Head of caudate nucleus (tissue), 42 donors: ENCODE measurements at regions of chr1 and their contacts with region 1.

Region 1: DNA sequence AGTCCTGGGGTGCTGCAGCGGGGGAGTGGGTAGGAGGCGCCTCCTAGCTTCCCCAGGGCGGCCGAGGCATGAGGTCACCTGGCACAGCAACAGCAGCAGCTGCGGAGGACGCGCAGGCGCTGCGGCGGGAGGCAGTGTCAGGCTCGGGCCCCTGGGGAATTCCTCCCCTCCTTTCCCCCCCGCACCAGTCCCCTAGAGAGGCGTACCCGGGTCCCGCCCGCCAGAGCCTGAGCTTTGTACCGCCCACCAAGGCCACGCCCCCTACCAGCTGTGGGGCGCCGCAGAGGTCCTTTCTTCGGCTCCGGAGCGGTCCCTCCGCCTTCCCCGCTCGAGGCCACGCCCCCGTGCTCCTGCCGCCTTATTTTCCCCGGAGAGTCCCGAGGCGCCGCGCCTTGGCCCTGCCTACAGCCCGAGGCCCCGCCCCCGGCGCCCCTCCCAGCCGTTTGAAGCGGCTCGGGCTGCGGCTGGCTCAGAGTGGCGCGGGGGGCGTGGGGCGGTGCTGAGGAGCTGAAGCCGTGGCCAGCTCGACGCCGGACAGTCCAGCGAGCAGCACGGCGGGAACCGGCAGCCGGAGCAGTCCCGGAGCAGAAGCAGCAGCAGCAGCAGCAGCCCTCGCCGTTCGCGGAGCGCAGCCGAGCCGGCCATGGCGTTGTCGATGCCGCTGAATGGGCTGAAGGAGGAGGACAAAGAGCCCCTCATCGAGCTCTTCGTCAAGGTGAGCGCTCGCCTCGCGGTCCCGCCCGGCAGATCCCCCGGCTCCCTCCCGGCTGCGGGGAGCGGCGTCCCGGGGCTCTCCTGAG is at the start of gene CLIC4:
- DNase-seq: peak; percentile 98 to 100 (median 100)

Region 2: DNA sequence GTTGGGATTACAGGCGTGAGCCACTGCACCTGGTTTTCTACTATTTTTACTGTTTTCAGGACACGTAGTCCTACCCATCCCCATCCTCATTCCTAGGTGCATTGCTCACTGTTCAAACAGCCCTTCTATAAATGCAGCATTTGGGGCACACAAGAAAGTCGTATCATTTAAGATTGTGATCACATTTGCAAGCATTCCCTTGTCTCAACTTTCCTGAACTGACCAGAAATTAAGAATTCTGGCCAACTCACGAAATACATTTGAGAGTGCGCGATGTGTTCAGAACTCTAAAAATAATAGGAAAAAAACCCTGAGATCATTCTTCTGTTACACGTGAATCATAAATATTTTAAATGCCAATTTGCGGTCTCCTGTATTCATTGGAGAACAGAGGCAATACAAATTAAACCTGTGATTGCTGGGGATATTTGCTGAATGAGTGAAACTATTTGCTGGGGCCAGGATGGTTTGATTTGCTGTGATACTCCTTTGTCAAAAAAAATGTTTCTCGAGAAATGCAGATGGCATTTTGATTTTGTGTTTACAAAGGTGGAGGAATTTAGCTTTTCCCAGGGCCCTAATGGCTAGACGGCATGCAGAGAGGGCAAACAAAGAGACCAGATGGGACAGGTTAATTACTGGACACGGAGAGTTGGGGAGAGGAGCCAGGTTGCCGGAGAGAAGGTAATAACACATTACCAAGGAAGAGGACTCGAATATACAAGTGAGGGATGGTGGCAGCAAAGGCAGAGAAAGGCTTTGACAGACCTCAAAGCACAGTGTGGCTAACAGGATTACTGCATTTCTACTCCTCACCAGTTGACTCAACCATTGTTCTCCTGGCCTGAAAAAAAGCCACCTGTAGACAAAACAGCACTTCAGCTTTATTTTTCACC is 370.0 kb before region 1 on chr1:
- intact Hi-C with region 1: no loop called
- DNase-seq: peak in 1 of 42 donors; percentile 16

Region 3: GRCh38 chr1:24648919-24649318 is 96.2 kb before region 1 on chr1:
- intact Hi-C with region 1: no loop called
- DNase-seq: no peak

Region 4: GRCh38 chr1:24688621-24689195 is 56.4 kb before region 1 on chr1:
- intact Hi-C with region 1: loop called (anchors 2 kb)
- DNase-seq: peak; percentile 61 to 93 (median 83)

Region 5: DNA sequence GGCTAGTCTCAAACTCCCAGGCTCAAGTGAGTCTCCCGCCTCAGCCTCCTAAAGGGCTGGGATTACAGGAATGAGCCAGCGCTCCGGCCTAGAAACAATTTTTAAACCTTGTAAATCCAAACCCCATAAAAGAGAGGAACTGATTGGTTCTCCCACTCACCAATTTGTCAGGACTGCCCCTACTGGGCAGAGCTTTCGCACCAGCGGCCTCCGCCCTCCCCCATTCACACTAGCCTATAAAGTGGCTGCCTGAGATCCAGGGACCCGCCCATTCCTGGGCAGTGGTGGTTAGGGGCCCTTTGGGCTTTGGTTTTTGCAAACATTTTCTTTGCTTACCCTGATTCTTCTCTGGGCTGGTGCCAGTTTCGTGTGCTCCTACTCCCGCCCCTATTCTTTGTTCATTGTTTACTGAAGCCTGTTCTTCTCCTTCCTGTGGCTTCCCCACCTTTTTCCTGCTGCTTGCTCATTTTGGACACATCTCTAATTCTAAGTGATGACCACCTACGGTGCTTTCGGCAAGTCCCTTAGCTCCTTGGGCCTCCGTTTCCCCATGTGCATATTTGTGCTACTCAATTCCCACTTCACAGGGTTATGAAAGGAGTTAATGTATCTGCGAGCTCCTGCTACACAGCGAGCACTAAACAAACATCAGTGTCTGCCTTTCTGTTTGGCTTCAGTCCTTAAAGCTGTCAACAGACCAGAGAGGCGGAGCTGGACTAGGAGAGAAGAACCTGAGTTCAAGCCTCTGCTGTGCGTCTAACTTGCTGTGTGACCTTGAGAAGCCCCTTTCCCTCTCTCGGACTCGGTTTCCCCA is 39.6 kb before region 1 on chr1:
- intact Hi-C with region 1: loop called (anchors 2 kb)
- DNase-seq: peak; percentile 62 to 94 (median 87)

Region 6: DNA sequence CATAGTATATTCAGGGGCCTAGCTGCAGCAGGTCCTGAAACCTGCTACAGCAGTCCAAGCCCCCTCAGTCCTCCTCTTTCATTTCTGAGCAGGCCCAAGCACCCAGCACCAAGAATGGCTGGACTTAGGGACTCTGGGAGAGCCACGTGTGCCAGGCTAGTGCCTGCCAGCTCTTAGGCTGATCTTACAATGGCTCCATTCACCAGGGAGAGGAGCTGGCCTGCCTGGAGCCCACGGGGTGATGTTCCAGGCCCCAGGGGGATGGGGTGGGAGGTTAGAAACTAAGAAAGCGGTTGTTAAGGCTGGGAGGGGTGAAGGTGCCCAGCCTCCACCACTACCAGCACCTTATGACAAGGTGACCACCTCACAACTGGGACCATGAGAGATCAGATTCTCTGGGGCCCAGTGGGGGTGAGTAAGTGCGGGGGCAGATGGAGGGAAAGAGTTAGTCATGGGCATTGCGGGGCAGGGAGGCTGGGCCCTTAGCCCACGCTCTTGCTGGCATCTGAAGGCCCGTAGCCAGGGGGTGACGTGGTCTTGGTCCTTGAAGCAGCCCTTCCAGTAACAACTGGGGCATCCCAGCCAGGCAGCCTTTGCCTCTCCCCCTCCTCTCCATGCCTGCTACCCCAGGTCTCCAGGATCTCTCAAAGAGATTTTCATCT is 30.1 kb before region 1 on chr1:
- intact Hi-C with region 1: loop called (anchors 1 kb)
- DNase-seq: peak; percentile 79 to 97 (median 90)

Region 7: DNA sequence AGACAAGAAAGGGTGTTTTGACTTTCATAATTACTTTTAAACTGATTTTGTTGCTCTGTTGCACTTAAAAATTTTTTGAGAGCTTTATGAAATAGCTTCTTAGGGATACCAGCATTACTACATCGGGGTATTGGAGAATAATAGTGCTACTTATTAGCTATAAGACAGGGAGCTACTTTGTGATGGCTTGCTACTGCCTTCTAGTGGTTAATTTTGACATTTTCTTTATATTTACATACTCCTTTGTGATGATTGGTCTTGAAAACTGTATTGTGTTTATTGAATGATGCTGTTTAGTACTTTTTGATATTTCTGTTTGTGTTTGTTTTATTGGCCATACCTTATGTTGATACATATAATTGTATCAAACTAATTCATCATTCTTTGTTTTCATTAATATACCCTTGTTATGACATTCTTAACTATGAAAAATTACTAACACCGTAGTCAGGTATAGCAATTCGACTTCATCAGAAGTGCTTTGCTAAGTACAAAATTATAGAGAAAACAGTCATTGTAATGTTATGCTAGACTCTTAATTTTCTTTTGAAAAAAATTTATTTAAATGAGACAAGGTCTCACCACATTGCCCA is 85.7 kb after region 1 on chr1:
- intact Hi-C with region 1: loop called (anchors 5 kb)
- DNase-seq: peak in 1 of 42 donors; percentile 51